Aorta (tissue), 5 donors: ENCODE measurements at regions of chr3 and their contacts with region 1.

Region 1: DNA sequence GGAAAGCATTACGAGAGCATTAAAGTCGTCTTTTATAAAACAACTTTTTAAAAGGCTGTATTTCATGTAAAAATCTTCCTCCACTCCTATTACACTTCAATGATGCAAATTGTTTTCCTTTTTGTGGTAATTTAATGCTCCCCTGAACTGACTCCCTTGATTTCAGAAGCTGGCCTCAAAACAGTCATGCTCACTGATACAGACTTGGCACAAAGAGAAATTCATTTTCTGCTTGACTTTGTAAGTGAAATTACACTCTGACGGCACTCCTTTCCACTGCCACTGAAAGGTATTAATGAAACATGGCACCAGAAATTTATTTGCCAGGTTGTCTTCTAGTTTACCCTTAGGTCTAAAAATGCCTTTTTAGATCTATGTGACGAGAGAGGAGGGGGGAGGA is 215.5 kb downstream of the LRRC3B start:
- DNase-seq: no peak
- ATAC-seq: no peak
- H3K4me3 ChIP-seq: no peak overlapping the region
- H3K27ac ChIP-seq: no peak overlapping the region
- H3K4me1 ChIP-seq: no peaks in the 10 kb centered on the region
- H3K27me3 ChIP-seq: no peaks in the 10 kb centered on the region

Region 2: DNA sequence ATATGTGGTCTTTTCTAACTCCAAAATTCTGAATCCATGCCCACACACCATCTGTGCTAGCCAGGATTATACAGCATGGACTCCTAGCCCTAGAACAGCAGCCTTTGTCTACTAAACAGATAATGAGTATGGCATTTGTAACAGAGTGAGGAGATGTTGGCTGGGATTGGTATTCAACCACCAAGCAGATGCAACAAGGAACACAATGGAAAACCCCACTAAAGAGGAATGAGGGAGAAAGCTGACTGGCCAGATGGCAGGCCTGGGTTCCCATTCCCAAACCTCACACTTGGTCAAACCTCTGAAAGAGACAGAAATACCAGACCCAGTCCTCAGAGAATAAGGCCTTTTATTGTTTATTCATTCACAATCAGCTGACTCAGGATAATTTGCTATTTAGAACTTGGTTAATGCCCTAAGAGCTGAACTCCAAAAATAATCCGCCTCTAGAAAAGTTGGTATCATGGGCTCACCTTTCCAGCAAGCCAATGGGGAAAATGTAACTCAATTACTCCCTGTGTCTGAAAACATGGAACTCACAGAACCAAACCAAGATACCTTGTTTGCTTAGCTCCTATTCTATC is 69.9 kb before region 1 on chr3:
- intact Hi-C with region 1: no loop called
- DNase-seq: no peak
- ATAC-seq: no peak
- H3K4me3 ChIP-seq: no peak overlapping the region
- H3K27ac ChIP-seq: no peak overlapping the region
- H3K4me1 ChIP-seq: no peaks in the 10 kb centered on the region
- H3K27me3 ChIP-seq: no peaks in the 10 kb centered on the region

Region 3: GRCh38 chr3:26799679-26800317 is 38.2 kb before region 1 on chr3:
- intact Hi-C with region 1: loop called in 1 of 2 experiments (anchors 2 kb)
- DNase-seq: no peak
- ATAC-seq: no peak
- H3K4me3 ChIP-seq: no peak overlapping the region
- H3K27ac ChIP-seq: no peak overlapping the region
- H3K4me1 ChIP-seq: no peaks in the 10 kb centered on the region
- H3K27me3 ChIP-seq: no peaks in the 10 kb centered on the region

Region 4: DNA sequence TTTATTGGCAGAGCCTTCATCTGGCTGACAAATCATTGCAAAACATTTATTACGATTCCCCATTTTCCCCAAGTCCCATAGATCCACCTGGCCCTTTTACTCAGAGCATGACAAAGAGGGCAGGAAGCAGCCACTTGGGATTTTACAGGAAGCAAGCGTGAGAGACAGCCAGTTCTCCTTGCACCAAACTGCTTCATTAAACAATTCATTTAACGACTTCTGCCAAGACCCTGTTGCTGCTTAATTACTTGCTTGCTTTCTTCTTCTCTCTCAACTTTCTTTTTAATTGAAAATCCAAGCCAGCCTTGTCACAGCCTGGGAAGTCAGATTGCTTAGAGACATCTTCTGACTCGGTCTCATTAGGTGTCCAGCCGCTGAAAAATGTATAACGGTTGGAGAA is 82.6 kb after region 1 on chr3:
- intact Hi-C with region 1: no loop called
- DNase-seq: no peak
- ATAC-seq: no peak
- H3K4me3 ChIP-seq: no peak overlapping the region
- H3K27ac ChIP-seq: no peak overlapping the region
- H3K4me1 ChIP-seq: no peaks in the 10 kb centered on the region
- H3K27me3 ChIP-seq: no peaks in the 10 kb centered on the region